ENCODE measurements at regions of chr5 and their contacts with region 1.

Region 1: GRCh38 chr5:124583469-124584350 is 162.7 kb downstream of the ZNF608 start:
- DNase-seq: peak; percentile 84
- ATAC-seq: peak; percentile 94
- H3K4me3 ChIP-seq: peak overlapping the region in 3 of 5 experiments; percentile 13 to 33 (median 21)
- H3K4me3 Mint-ChIP-seq: peak overlapping the region; percentile 74
- H3K27ac ChIP-seq: peak overlapping the region; percentile 56 to 60
- H3K27ac Mint-ChIP-seq: peak overlapping the region; percentile 89
- H3K4me1 ChIP-seq: peaks cover 19 to 27% of the 10 kb centered on the region in 2 donors
- H3K4me1 Mint-ChIP-seq: peaks cover 32% of the 10 kb centered on the region
- H3K27me3 ChIP-seq: no peaks in the 10 kb centered on the region
- H3K27me3 Mint-ChIP-seq: no peaks in the 10 kb centered on the region
- CTCF ChIP-seq: no peak

Region 2: GRCh38 chr5:124365361-124365801 is 218.3 kb before region 1 on chr5:
- CTCF ChIA-PET with region 1: no interaction called
- POLR2A ChIA-PET with region 1: no interaction called
- intact Hi-C with region 1: no loop called
- DNase-seq: no peak
- ATAC-seq: no peak
- H3K4me3 ChIP-seq: no peak overlapping the region
- H3K4me3 Mint-ChIP-seq: no peak overlapping the region
- H3K27ac ChIP-seq: no peak overlapping the region
- H3K27ac Mint-ChIP-seq: no peak overlapping the region
- H3K4me1 ChIP-seq: no peaks in the 10 kb centered on the region
- H3K4me1 Mint-ChIP-seq: no peaks in the 10 kb centered on the region
- H3K27me3 ChIP-seq: no peaks in the 10 kb centered on the region
- H3K27me3 Mint-ChIP-seq: no peaks in the 10 kb centered on the region
- CTCF ChIP-seq: no peak

Region 3: DNA sequence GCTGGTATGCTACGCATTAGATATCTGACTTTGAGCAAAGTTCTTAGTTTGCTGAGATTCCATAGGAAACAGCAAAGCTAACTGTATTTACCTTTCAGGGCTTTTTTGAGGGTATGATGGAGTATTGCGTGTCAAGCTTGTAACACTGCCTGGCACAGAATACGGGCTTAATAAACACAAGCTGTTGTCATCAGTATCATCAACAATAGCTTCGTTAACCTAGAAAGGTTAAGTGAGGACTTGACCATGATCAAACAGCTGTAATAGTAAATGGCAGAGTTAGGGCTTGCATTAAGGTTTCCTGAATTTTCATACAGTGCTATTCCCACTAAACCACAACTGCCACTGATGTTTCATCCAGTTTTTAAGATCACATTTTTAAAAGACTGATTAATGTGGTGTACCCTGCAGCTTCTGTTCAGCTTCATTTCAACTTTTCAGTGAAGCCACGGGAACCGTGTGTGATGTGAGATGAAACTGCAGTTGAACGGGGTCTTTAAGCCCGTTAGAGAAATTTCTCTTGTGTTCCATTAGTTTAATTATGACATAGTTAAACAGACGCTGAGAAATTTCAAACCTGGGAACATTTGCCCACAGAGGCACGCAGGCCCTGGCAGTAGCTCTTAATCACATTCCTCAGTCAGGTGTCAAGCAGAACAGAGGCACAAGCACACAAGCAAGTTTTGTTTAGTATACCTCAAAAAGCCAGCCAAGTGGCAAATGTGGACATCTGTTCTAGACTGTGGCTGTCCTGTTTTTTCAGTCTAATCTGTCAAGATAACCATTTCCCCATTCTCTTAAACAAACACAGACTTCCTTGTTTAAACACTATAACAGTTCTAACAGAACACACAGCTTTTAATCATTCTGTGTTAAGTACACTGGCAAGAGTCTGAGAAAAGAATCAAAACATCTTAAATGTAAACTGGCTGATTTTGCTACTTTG is 15.6 kb after region 1 on chr5:
- CTCF ChIA-PET with region 1: interaction called, 5 read pairs
- POLR2A ChIA-PET with region 1: interaction called, 9 read pairs
- intact Hi-C with region 1: loop called (anchors 2 kb)
- DNase-seq: peak; percentile 74
- ATAC-seq: peak; percentile 86
- H3K4me3 ChIP-seq: no peak overlapping the region
- H3K4me3 Mint-ChIP-seq: peak overlapping the region; percentile 73
- H3K27ac ChIP-seq: no peak overlapping the region
- H3K27ac Mint-ChIP-seq: peak overlapping the region; percentile 42
- H3K4me1 ChIP-seq: peaks cover 28 to 32% of the 10 kb centered on the region in 2 donors
- H3K4me1 Mint-ChIP-seq: peaks cover 36% of the 10 kb centered on the region
- H3K27me3 ChIP-seq: peaks cover 0 to 5% (median 0%) of the 10 kb centered on the region in 4 experiments
- H3K27me3 Mint-ChIP-seq: no peaks in the 10 kb centered on the region
- CTCF ChIP-seq: no peak

Measured in B cell (primary cell).